ENCODE measurements at regions of chr3 and their contacts with region 1.

Region 1: GRCh38 chr3:189883113-189883753 is 237.5 kb downstream of the P3H2 start:
- DNase-seq: no peak
- ATAC-seq: no peak
- H3K4me3 ChIP-seq: no peak overlapping the region
- H3K27ac ChIP-seq: no peak overlapping the region
- H3K4me1 ChIP-seq: no peaks in the 10 kb centered on the region
- H3K27me3 ChIP-seq: no peaks in the 10 kb centered on the region
- CTCF ChIP-seq: no peak
- POLR2A ChIP-seq: no peak

Region 2: DNA sequence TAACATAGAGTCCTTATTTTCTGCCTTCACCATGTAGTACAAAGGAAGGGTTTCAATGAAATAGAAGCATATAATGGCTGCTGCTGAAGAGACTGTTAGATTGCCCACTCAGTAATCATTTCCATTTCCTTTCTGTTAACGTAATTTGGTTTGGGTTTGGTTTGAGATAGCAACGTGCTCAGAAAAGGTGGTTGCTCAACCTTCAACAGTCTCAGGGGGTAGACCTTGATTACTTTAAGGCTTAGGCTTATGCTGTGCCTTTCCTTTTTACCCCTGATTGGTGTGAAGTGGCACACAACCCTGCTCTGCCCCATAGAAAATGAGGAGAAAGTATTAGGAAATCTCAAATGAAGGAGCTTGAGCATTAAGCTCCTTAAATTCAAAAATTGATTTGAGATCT is 415.8 kb before region 1 on chr3:
- in situ Hi-C with region 1: no loop called
- intact Hi-C with region 1: loop called (anchors 5 kb)
- DNase-seq: no peak
- ATAC-seq: no peak
- H3K4me3 ChIP-seq: no peak overlapping the region
- H3K27ac ChIP-seq: no peak overlapping the region
- H3K4me1 ChIP-seq: no peaks in the 10 kb centered on the region
- H3K27me3 ChIP-seq: no peaks in the 10 kb centered on the region
- CTCF ChIP-seq: no peak
- POLR2A ChIP-seq: no peak

Region 3: DNA sequence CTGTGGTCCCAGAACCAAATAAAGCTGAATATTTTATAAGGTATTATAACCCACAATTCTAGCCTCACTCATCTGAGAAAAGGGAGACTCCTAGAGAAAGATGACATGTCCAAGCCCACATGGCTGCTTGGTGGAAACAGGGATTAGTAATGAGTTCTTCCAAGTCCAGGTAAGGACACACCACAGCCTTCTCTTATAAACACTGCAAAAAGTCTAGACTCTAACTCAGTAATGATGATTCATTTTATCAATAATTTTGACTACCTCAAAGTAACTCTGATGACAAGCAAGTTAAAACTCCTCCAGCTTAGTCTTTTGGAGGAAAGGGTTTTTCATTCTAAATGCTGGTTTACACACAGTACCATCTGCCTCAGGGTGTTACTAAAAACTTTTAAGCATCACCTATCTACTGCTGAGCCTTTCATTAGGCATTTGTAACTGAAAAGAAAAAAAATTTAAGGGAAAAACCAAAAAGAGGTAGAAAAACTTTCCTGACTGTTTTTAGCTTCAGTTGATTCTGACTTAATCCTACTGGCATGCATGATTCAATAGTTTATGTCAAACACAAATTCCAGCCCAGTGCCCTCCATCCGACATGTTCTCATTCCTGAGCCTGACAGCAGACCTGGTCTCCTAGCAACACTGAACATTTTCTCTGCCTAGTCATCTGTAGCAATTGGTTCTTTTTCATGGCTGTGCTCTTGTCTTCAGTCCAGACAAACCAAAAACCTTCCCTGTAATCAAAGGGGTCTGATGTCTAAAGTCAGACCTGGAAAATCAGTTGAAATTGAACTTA is 193.6 kb after region 1 on chr3:
- in situ Hi-C with region 1: no loop called
- intact Hi-C with region 1: no loop called
- DNase-seq: no peak
- ATAC-seq: no peak
- H3K4me3 ChIP-seq: no peak overlapping the region
- H3K27ac ChIP-seq: no peak overlapping the region
- H3K4me1 ChIP-seq: no peaks in the 10 kb centered on the region
- H3K27me3 ChIP-seq: no peaks in the 10 kb centered on the region
- CTCF ChIP-seq: no peak
- POLR2A ChIP-seq: no peak

Measured in gastrocnemius medialis (tissue), 4 donors.